Activated CD8-positive, alpha-beta T cell treated with anti-CD3 and anti-CD28 coated beads, Interleukin-2, amount 10 ng/mL, durations not matched to agents 7 days and 5 days (primary cell): ENCODE measurements at regions of chr2 and their contacts with region 1.

Region 1: GRCh38 chr2:20781656-20782265 is 41.1 kb downstream of the LDAH start:
- DNase-seq: no peak
- ATAC-seq: no peak
- H3K4me3 Mint-ChIP-seq: no peak overlapping the region
- H3K27ac Mint-ChIP-seq: no peak overlapping the region
- H3K4me1 Mint-ChIP-seq: peaks cover 2% of the 10 kb centered on the region
- H3K27me3 Mint-ChIP-seq: no peaks in the 10 kb centered on the region

Region 2: GRCh38 chr2:20962939-20963557 is 181.3 kb after region 1 on chr2:
- CTCF ChIA-PET with region 1: interaction called, 20 read pairs
- POLR2A ChIA-PET with region 1: no interaction called
- DNase-seq: peak; percentile 74
- ATAC-seq: peak; percentile 75
- H3K4me3 Mint-ChIP-seq: no peak overlapping the region
- H3K27ac Mint-ChIP-seq: no peak overlapping the region
- H3K4me1 Mint-ChIP-seq: no peaks in the 10 kb centered on the region
- H3K27me3 Mint-ChIP-seq: no peaks in the 10 kb centered on the region